ENCODE measurements at regions of chrX and their contacts with region 1.

Region 1: DNA sequence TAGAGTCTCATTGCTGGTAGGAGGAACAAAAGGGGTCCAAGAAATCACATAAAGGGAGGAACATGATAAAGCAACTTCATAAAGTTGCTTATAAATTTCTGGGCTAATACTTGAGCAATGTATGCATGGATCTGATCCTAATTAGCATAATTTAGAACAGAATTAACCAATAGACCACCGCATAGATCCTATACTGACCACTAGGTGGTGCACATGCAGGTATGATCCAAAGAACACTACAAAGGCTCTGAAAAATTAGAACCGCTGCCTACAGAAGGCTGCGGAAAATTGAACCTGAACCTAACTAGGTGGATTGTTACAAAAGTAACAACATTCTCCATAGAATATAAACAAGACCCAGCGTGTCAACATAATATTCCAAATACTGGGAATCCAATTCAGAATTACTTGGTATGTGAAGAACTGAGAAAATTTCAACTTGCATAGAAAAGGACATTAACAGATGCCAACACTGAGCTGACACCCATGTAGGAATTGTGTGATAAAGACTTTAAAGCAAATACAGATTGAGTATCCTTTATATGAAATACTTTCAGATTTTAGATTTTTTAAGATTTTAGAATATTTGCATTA is 23.3 kb downstream of the BRCC3 start:
- DNase-seq: no peak
- ATAC-seq: no peak
- H3K4me3 ChIP-seq: no peak overlapping the region
- H3K27ac ChIP-seq: no peak overlapping the region
- H3K4me1 ChIP-seq: no peaks in the 10 kb centered on the region
- H3K27me3 ChIP-seq: no peaks in the 10 kb centered on the region
- CTCF ChIP-seq: peak; percentile 43 to 67 (median 54)
- POLR2A ChIP-seq: no peak

Region 2: DNA sequence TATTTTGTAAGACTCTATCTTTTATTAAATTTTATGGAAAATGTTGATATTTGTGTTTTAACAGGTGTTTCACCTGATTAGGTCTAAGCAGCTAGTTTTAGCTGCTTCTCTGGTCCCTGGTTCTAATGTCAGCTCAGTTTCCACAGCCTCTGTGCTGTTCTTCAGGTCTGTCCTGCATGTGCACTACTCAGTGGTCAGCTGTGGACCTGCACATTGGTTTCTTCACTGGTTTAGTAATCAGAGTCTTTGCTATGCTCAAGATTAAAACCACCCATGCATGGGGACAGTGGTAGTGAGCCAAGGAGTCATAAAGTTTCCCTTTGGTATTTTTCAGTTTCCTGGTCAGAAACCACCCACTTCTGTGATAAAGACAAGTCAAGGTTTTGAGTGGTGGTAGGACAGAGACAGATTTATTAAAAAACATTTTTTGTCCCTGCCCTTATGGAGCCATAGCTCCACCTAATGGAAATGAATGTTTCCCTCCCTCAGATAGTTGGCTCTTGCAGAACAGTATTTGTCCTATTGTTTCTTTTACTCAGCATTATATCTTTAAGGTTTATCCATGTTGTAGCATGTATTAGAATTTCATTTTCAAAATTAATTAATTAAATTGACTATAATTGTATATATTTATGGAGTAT is 84.9 kb after region 1 on chrX:
- intact Hi-C with region 1: loop called in 1 of 10 experiments (anchors 10 kb)
- DNase-seq: no peak
- ATAC-seq: no peak
- H3K4me3 ChIP-seq: no peak overlapping the region
- H3K27ac ChIP-seq: no peak overlapping the region
- H3K4me1 ChIP-seq: no peaks in the 10 kb centered on the region
- H3K27me3 ChIP-seq: no peaks in the 10 kb centered on the region
- CTCF ChIP-seq: peak in 2 of 12 donors; percentile 14 to 20
- POLR2A ChIP-seq: no peak

Region 3: GRCh38 chrX:155216179-155216939 is 121.8 kb after region 1 on chrX and contains the start of gene VBP1:
- intact Hi-C with region 1: loop called in 1 of 10 experiments (anchors 10 kb)
- DNase-seq: peak; percentile 92 to 94 (median 92)
- ATAC-seq: peak; percentile 99 to 100 (median 99)
- H3K4me3 ChIP-seq: peak within 1 kb of the TSS; percentile 47 to 88 (median 74)
- H3K27ac ChIP-seq: peak within 1 kb of the TSS; percentile 79 to 92 (median 88)
- H3K4me1 ChIP-seq: peaks cover 0 to 27% (median 5%) of the 10 kb centered on the region in 12 donors
- H3K27me3 ChIP-seq: no peaks in the 10 kb centered on the region
- CTCF ChIP-seq: peak in 10 of 12 donors; percentile 26 to 59 (median 46)
- POLR2A ChIP-seq: no peak
- total RNA-seq, gene VBP1: 39.6 to 82.8 (median 72.3) TPM

Region 4: GRCh38 chrX:155819966-155820491 is 725.5 kb after region 1 on chrX:
- intact Hi-C with region 1: loop called in 6 of 10 experiments (anchors 5 to 10 kb)
- DNase-seq: peak in 4 of 5 donors; percentile 61 to 72 (median 68)
- ATAC-seq: peak; percentile 58 to 86 (median 79)
- H3K4me3 ChIP-seq: no peak overlapping the region
- H3K27ac ChIP-seq: no peak overlapping the region
- H3K4me1 ChIP-seq: no peaks in the 10 kb centered on the region
- H3K27me3 ChIP-seq: peaks cover 0 to 7% (median 0%) of the 10 kb centered on the region in 9 donors
- CTCF ChIP-seq: peak; percentile 43 to 76 (median 64)
- POLR2A ChIP-seq: no peak

Measured in heart left ventricle (tissue), 16 donors.